B cell (primary cell): ENCODE measurements at regions of chr6 and their contacts with region 1.

Region 1: GRCh38 chr6:10954590-10955010 is 67.7 kb downstream of the SYCP2L start:
- DNase-seq: peak; percentile 73
- ATAC-seq: peak; percentile 54
- H3K4me3 ChIP-seq: no peak overlapping the region
- H3K4me3 Mint-ChIP-seq: no peak overlapping the region
- H3K27ac ChIP-seq: no peak overlapping the region
- H3K27ac Mint-ChIP-seq: no peak overlapping the region
- H3K4me1 ChIP-seq: no peaks in the 10 kb centered on the region
- H3K4me1 Mint-ChIP-seq: no peaks in the 10 kb centered on the region
- H3K27me3 ChIP-seq: peaks cover 0 to 2% (median 0%) of the 10 kb centered on the region in 4 experiments
- H3K27me3 Mint-ChIP-seq: peaks cover 22% of the 10 kb centered on the region
- CTCF ChIP-seq: peak; percentile 81

Region 2: GRCh38 chr6:10073341-10073740 is 881.3 kb before region 1 on chr6:
- CTCF ChIA-PET with region 1: no interaction called
- POLR2A ChIA-PET with region 1: no interaction called
- intact Hi-C with region 1: no loop called
- DNase-seq: no peak
- ATAC-seq: no peak
- H3K4me3 ChIP-seq: no peak overlapping the region
- H3K4me3 Mint-ChIP-seq: no peak overlapping the region
- H3K27ac ChIP-seq: no peak overlapping the region
- H3K27ac Mint-ChIP-seq: no peak overlapping the region
- H3K4me1 ChIP-seq: no peaks in the 10 kb centered on the region
- H3K4me1 Mint-ChIP-seq: no peaks in the 10 kb centered on the region
- H3K27me3 ChIP-seq: no peaks in the 10 kb centered on the region
- H3K27me3 Mint-ChIP-seq: no peaks in the 10 kb centered on the region
- CTCF ChIP-seq: no peak

Region 3: DNA sequence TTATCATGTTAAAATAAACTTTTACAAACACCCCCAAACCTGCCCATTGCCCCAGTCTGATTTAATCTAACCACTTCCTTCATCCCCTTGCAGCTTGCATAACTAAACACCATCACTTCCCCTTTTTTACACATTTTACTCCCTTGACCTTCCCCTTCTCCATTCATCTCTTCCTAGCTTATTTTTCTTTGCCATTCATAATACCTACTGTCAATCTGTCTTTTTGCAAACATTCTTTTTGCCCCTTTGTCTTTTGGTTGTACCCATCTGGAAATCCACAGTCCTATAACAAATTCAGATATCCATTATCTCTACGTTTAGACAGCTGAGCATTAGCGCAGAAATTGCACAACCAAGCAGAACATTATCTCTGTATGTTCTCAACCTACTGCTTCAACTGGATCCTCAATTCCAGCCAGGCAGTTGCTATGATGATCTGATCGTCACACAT is 311.4 kb before region 1 on chr6:
- CTCF ChIA-PET with region 1: no interaction called
- POLR2A ChIA-PET with region 1: no interaction called
- intact Hi-C with region 1: no loop called
- DNase-seq: peak; percentile 61
- ATAC-seq: peak; percentile 81
- H3K4me3 ChIP-seq: peak overlapping the region in 2 of 5 experiments; percentile 9 to 26
- H3K4me3 Mint-ChIP-seq: peak overlapping the region; percentile 76
- H3K27ac ChIP-seq: no peak overlapping the region
- H3K27ac Mint-ChIP-seq: peak overlapping the region; percentile 5
- H3K4me1 ChIP-seq: peaks cover 23 to 27% of the 10 kb centered on the region in 2 donors
- H3K4me1 Mint-ChIP-seq: peaks cover 34% of the 10 kb centered on the region
- H3K27me3 ChIP-seq: no peaks in the 10 kb centered on the region
- H3K27me3 Mint-ChIP-seq: no peaks in the 10 kb centered on the region
- CTCF ChIP-seq: no peak

Region 4: GRCh38 chr6:11064836-11065235 is 110.2 kb after region 1 on chr6:
- CTCF ChIA-PET with region 1: interaction called, 42 read pairs
- POLR2A ChIA-PET with region 1: no interaction called
- intact Hi-C with region 1: loop called (anchors 1 kb)
- DNase-seq: no peak
- ATAC-seq: no peak
- H3K4me3 ChIP-seq: no peak overlapping the region
- H3K4me3 Mint-ChIP-seq: no peak overlapping the region
- H3K27ac ChIP-seq: no peak overlapping the region
- H3K27ac Mint-ChIP-seq: no peak overlapping the region
- H3K4me1 ChIP-seq: no peaks in the 10 kb centered on the region
- H3K4me1 Mint-ChIP-seq: no peaks in the 10 kb centered on the region
- H3K27me3 ChIP-seq: peaks cover 0 to 3% (median 3%) of the 10 kb centered on the region in 4 experiments
- H3K27me3 Mint-ChIP-seq: peaks cover 18% of the 10 kb centered on the region
- CTCF ChIP-seq: no peak

Region 5: DNA sequence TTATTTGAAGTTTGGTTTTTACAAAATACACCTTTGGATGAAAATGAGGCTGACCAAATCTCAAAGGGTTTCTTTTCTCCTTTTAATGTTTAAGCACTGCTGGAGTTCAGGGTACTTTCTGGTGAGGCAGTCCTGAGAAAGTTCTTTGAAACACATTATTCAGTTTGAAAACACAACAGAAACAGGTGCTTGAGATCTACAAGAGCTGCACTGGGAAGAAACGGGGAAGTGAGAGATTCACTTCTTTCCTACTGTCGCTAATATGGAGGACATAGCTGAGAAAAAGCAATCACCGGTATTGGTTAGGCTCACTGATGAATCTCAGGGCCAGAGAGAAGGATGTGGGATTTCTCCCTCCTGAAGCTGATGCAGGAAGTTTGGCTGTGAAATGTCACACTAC is 560.1 kb after region 1 on chr6:
- CTCF ChIA-PET with region 1: no interaction called
- POLR2A ChIA-PET with region 1: no interaction called
- intact Hi-C with region 1: no loop called
- DNase-seq: peak; percentile 58
- ATAC-seq: peak; percentile 60
- H3K4me3 ChIP-seq: no peak overlapping the region
- H3K4me3 Mint-ChIP-seq: peak overlapping the region; percentile 51
- H3K27ac ChIP-seq: peak overlapping the region; percentile 7 to 52
- H3K27ac Mint-ChIP-seq: peak overlapping the region; percentile 70
- H3K4me1 ChIP-seq: peaks cover 18 to 21% of the 10 kb centered on the region in 2 donors
- H3K4me1 Mint-ChIP-seq: peaks cover 30% of the 10 kb centered on the region
- H3K27me3 ChIP-seq: no peaks in the 10 kb centered on the region
- H3K27me3 Mint-ChIP-seq: no peaks in the 10 kb centered on the region
- CTCF ChIP-seq: no peak